Activated CD8-positive, alpha-beta T cell treated with anti-CD3 and anti-CD28 coated beads, Interleukin-2, amount 10 ng/mL, durations not matched to agents 7 days and 5 days (primary cell): ENCODE measurements at regions of chr12 and their contacts with region 1.

Region 1: DNA sequence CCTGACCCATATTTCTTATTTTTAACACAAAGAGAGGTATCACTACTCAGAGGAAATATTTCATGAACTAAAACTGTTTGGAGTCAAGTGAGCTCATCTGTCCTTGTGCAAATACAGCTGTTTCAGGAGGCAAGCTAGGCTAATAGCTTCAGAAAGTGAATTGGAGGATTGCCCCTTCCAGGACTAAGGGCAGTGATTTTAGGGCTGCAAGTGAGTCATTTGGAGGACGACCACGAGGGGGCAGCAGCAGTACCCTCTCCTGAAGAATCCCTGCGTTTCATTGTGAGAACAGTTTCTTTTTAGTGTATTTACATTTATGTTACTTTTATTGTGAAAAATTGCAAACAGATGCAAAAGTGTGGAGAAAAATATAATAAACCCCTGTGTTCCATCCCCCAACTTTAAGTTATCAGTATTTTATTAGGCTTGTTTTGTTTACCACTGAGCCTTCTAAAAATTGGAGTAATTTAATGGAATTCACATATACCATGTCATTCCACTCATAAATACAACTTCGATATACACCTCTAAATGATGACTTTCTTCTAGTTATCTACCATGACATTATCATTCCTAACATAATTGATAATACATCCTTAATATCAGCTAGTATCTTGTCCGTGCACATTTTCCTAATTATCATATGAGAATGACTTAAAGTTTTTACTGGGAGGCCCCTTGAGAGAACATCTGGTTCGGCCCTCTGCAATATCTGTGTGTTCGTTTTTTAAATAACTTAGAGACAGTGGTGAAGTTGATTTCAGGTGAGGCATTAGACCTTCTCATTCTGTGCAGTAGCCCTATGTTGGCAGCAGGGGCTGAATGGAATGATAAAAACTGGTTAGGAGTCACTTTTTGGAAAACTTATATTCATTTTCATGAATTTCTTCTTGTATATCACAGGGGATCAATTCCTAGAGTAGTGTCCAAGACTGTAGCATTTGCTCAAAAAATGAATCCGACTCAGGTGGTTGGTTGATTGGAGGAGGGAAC is 13.7 kb downstream of the FOXJ2 start:
- DNase-seq: peak; percentile 88
- ATAC-seq: peak; percentile 82
- H3K4me3 Mint-ChIP-seq: no peak overlapping the region
- H3K27ac Mint-ChIP-seq: peak overlapping the region; percentile 18
- H3K4me1 Mint-ChIP-seq: peaks cover 9% of the 10 kb centered on the region
- H3K27me3 Mint-ChIP-seq: no peaks in the 10 kb centered on the region

Region 2: GRCh38 chr12:7959701-7960121 is 86.5 kb before region 1 on chr12:
- CTCF ChIA-PET with region 1: no interaction called
- POLR2A ChIA-PET with region 1: no interaction called
- DNase-seq: peak; percentile 78
- ATAC-seq: peak; percentile 72
- H3K4me3 Mint-ChIP-seq: peak overlapping the region; percentile 85
- H3K27ac Mint-ChIP-seq: peak overlapping the region; percentile 91
- H3K4me1 Mint-ChIP-seq: peaks cover 42% of the 10 kb centered on the region
- H3K27me3 Mint-ChIP-seq: no peaks in the 10 kb centered on the region

Region 3: GRCh38 chr12:7989827-7990551 is 56.3 kb before region 1 on chr12:
- CTCF ChIA-PET with region 1: no interaction called
- POLR2A ChIA-PET with region 1: no interaction called
- DNase-seq: peak; percentile 83
- ATAC-seq: peak; percentile 90
- H3K4me3 Mint-ChIP-seq: peak overlapping the region; percentile 59
- H3K27ac Mint-ChIP-seq: peak overlapping the region; percentile 89
- H3K4me1 Mint-ChIP-seq: peaks cover 34% of the 10 kb centered on the region
- H3K27me3 Mint-ChIP-seq: no peaks in the 10 kb centered on the region

Region 4: GRCh38 chr12:8032242-8033152 is 13.8 kb before region 1 on chr12 and contains the start of gene FOXJ2:
- CTCF ChIA-PET with region 1: interaction called, 25 read pairs
- POLR2A ChIA-PET with region 1: no interaction called
- DNase-seq: peak; percentile 81
- ATAC-seq: peak; percentile 93
- H3K4me3 Mint-ChIP-seq: peak within 1 kb of the TSS; percentile 83
- H3K27ac Mint-ChIP-seq: peak within 1 kb of the TSS; percentile 74
- H3K4me1 Mint-ChIP-seq: peaks cover 49% of the 10 kb centered on the region
- H3K27me3 Mint-ChIP-seq: peaks cover 4% of the 10 kb centered on the region
- total RNA-seq, gene FOXJ2: 16.9 to 17.1 TPM

Region 5: DNA sequence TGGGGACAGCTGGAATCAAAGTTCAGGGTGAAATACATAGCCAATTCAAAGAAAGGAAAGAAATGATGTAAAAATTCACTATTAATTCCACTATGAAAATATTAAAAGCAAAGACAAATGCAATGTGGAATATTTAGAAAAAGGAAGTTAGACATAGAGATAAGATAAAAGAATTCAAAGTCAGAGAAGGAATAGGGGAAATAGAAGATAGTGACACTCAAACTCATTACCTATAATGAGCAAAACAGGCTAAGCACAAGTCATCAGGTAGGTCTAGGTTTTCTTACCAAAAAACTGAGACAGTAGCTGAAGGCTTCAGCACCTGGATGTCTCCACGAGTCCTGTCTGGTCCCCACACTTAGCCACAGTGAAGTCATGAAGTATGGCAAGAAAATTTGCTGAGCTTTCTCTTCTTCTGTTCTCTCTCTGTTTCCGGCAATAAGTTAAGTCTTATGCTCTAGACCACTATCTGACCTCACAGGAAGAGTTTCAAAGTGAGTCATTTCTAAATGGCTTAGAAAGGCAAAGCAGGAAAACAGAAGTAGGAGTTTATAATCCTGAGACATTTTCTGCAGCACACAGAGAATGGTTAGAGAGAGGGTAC is 19.8 kb after region 1 on chr12 and contains the start of gene C3AR1:
- CTCF ChIA-PET with region 1: interaction called, 15 read pairs
- POLR2A ChIA-PET with region 1: interaction called, 4 read pairs
- DNase-seq: peak; percentile 63
- ATAC-seq: peak; percentile 100
- H3K4me3 Mint-ChIP-seq: peak within 1 kb of the TSS; percentile 71
- H3K27ac Mint-ChIP-seq: peak within 1 kb of the TSS; percentile 82
- H3K4me1 Mint-ChIP-seq: peaks cover 41% of the 10 kb centered on the region
- H3K27me3 Mint-ChIP-seq: no peaks in the 10 kb centered on the region
- total RNA-seq, gene C3AR1: 8.8 to 9.1 TPM